Activated T-helper 2 cell treated with anti-CD3 and anti-CD28 coated beads, Interferon-gamma antibody, Interleukin-2, Interleukin-4, amounts not matched to agents 10 μg/mL and 5 μg/mL and 100 μg/mL, durations not matched to agents 14 hours and 24 hours and 36 hours (primary cell): ENCODE measurements at regions of chr1 and their contacts with region 1.

Region 1: GRCh38 chr1:101081496-101082488 is 56.2 kb upstream of the DPH5 start:
- DNase-seq: peak; percentile 64
- H3K4me3 Mint-ChIP-seq: peak overlapping the region; percentile 0
- H3K27ac Mint-ChIP-seq: peak overlapping the region; percentile 67
- H3K4me1 Mint-ChIP-seq: peaks cover 51% of the 10 kb centered on the region
- H3K27me3 Mint-ChIP-seq: no peaks in the 10 kb centered on the region

Region 2: DNA sequence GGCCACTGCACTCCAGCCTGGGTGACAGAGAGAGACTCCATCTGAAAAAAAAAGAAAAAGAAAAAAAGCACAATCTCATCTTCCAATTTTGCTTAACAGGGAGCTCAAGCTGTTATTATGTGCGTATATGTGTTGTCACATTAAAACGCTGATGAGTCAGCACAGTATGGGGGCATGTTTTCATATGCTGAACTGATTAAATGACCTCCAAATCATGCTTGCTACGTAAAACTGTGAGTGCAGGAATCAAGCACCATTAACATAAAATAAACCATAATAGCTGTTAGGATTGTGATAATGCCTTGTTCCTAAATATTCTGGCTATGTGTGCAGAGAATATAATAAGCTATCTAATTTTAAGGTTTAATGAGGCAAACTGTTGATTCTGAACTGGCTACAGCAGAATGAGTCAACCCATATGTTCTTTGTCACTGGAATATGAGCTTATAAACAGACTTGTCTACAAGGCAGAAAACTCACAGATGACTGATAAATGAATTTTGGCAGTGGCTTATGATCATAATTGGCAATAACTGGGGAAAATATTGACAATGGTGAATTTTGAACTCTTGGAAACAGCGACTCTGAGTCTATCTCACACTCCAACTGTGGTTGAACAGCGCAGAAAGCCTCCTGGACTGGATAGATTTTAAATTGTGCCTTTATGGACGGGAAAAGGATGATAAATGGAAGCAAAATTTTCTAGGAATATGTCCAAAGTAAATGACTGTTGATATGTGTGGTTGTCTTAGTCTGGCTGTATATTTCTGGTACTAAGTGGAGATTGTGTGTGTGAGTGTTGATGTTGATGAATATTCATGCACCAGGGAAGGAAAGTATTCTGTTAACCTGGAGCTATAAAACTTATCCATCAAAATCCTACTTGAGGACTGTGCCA is 286.8 kb before region 1 on chr1:
- intact Hi-C with region 1: no loop called
- DNase-seq: no peak
- H3K4me3 Mint-ChIP-seq: no peak overlapping the region
- H3K27ac Mint-ChIP-seq: no peak overlapping the region
- H3K4me1 Mint-ChIP-seq: no peaks in the 10 kb centered on the region
- H3K27me3 Mint-ChIP-seq: peaks cover 3% of the 10 kb centered on the region

Region 3: GRCh38 chr1:100941098-100941527 is 140.7 kb before region 1 on chr1:
- intact Hi-C with region 1: loop called (anchors 5 kb)
- DNase-seq: no peak
- H3K4me3 Mint-ChIP-seq: no peak overlapping the region
- H3K27ac Mint-ChIP-seq: peak overlapping the region; percentile 86
- H3K4me1 Mint-ChIP-seq: peaks cover 35% of the 10 kb centered on the region
- H3K27me3 Mint-ChIP-seq: peaks cover 1% of the 10 kb centered on the region

Region 4: GRCh38 chr1:101128211-101128727 is 46.5 kb after region 1 on chr1:
- intact Hi-C with region 1: loop called (anchors 2 kb)
- DNase-seq: peak; percentile 20
- H3K4me3 Mint-ChIP-seq: peak overlapping the region; percentile 64
- H3K27ac Mint-ChIP-seq: peak overlapping the region; percentile 89
- H3K4me1 Mint-ChIP-seq: peaks cover 62% of the 10 kb centered on the region
- H3K27me3 Mint-ChIP-seq: no peaks in the 10 kb centered on the region